Activated naive CD4-positive, alpha-beta T cell treated with anti-CD3 and anti-CD28 coated beads for 36 hours (primary cell): ENCODE measurements at regions of chr22 and their contacts with region 1.

Region 1: DNA sequence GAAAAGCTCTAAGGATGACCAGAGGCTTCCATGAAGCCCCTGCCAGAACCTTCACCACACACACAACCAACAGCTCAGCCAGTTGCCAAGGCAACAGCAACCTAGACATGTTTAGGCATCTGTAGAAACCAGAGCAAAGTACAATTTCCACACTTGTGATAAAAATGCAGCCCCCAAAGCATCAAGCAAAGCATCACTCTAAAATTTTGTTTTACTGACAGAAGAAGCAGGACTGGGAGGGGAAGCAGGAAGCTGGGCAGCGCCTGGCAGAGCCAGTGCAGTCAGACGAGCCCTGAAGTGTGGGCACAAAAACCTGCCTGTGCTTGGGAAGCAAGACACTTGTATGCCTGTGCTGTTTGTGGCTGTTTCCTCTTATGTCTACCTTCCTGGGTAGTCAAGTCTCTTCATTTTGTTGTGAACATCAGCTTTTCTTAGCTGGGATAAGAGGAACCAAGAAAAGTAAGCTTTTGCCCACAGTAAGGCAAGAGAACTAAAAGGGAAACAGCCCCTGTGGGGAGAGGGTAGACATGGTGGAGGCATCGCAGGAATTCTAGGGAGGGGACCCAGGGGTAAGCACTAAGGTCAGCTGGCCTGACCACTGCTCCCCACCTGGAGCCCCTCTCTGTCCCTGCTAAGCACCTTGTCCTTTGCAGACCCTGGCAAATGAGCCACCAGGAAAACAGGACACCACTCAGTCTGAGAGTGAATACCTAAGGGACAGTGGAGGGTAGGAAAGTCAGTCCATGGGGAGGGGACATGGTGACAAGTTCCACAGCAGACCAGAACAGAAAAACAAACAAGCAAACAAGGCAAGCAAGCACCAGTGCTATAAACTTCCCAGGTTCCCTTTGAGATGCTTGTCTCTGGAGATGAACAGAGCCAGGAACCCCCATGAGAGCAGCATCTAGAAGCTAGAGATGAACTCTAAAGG is 13.4 kb downstream of the PACSIN2 start:
- DNase-seq: peak; percentile 29
- H3K4me3 Mint-ChIP-seq: no peak overlapping the region
- H3K27ac Mint-ChIP-seq: peak overlapping the region; percentile 11
- H3K4me1 Mint-ChIP-seq: peaks cover 86% of the 10 kb centered on the region
- H3K27me3 Mint-ChIP-seq: no peaks in the 10 kb centered on the region

Region 2: GRCh38 chr22:42959576-42960509 is 41.7 kb before region 1 on chr22:
- CTCF ChIA-PET with region 1: interaction called, 3 read pairs
- intact Hi-C with region 1: loop called (anchors 1 kb)
- DNase-seq: peak; percentile 36
- H3K4me3 Mint-ChIP-seq: peak overlapping the region; percentile 64
- H3K27ac Mint-ChIP-seq: peak overlapping the region; percentile 26
- H3K4me1 Mint-ChIP-seq: peaks cover 68% of the 10 kb centered on the region
- H3K27me3 Mint-ChIP-seq: no peaks in the 10 kb centered on the region

Region 3: DNA sequence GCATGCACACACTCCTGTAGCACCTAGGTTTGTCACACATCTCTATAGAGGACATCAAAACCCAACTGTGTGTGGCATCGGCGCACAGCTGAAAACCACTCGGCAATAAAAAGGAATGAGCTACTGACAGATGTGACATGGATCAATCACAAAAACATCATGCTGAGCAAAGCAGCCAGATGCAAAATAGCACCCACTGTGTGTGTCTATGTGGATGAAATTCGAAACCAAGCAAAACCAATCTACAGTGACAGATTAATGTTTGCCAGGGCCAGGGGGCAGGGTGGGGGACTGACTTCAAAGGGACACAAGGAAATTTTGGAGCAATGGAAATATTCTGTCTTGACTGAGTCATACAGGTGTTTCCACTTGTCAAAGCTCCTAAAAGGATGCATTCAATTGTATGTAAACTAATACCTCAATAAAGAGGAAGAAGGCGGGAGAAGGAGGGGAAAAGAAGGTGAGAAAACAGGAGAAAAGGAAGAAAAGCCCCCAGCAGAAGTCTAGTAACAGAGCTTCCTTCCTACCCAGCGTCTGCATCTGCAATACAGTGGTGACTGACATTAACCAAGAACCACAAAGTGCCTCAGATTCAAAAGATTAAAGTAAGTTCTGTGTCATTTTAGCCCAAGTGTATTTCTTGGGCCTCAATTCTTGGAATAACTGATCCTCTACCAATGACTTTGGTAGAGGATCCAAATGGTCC is 36.4 kb before region 1 on chr22:
- CTCF ChIA-PET with region 1: no interaction called
- intact Hi-C with region 1: loop called (anchors 2 kb)
- DNase-seq: peak; percentile 58
- H3K4me3 Mint-ChIP-seq: no peak overlapping the region
- H3K27ac Mint-ChIP-seq: peak overlapping the region; percentile 15
- H3K4me1 Mint-ChIP-seq: peaks cover 69% of the 10 kb centered on the region
- H3K27me3 Mint-ChIP-seq: no peaks in the 10 kb centered on the region

Region 4: DNA sequence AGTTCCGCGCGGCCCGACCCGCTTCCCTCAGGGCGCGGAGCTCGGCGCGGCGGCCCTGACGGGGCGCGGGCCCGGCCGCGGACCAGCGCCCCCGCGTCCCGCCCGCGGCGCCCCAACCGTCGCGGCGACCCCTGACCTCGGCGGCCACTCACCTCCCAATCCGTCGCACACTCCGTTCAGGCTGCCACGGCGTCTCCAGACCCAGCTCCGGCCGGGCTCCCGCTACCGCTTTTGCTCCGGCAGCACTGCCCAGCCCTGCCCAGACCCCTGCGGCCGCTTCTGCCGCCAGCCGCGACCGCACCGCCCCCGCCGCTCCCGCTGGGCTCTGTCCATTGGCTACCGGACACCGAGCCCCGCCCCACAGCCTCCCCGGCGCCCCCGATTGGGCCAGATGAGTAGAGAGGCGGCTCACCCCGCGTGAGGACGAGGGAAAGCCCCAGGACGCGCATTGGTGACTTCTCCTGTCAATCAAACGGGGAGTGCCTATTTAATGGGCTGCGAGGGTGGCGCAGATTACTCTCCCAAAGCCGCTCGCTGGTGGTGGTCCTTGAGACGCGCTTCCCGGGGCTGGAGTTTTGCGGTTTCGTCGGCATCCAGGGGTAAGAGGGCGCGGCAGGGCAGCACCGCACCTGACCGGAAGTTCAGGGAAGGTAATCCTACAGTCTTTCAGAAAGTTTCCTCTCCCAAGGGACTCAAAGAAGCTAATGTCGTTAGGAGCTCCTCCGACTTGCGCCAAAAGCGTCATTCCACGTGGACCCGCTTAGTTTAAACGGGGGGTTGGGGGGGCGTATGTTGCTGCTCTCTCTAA is 13.5 kb after region 1 on chr22 and contains the start of gene PACSIN2:
- CTCF ChIA-PET with region 1: no interaction called
- intact Hi-C with region 1: loop called (anchors 1 kb)
- DNase-seq: peak; percentile 100
- H3K4me3 Mint-ChIP-seq: peak within 1 kb of the TSS; percentile 94
- H3K27ac Mint-ChIP-seq: peak within 1 kb of the TSS; percentile 71
- H3K4me1 Mint-ChIP-seq: peaks cover 21% of the 10 kb centered on the region
- H3K27me3 Mint-ChIP-seq: no peaks in the 10 kb centered on the region
- total RNA-seq, gene PACSIN2: 31.2 to 32.9 TPM